Endothelial cell of umbilical vein (primary cell): ENCODE measurements at regions of chr2 and their contacts with region 1.

Region 1: GRCh38 chr2:212249451-212249850 is 289.2 kb downstream of the ERBB4 start:
- DNase-seq: peak; percentile 46
- H3K4me3 ChIP-seq: no peak overlapping the region
- H3K27ac ChIP-seq: no peak overlapping the region
- H3K4me1 ChIP-seq: no peaks in the 10 kb centered on the region
- H3K27me3 ChIP-seq: no peaks in the 10 kb centered on the region
- CTCF ChIP-seq: peak; percentile 23 to 41
- POLR2A ChIP-seq: no peak

Region 2: GRCh38 chr2:211455216-211455841 is 794.1 kb before region 1 on chr2:
- CTCF ChIA-PET with region 1: interaction called, 11 read pairs
- POLR2A ChIA-PET with region 1: no interaction called
- dilution Hi-C with region 1: no loop called
- intact Hi-C with region 1: no loop called
- DNase-seq: peak; percentile 63
- H3K4me3 ChIP-seq: no peak overlapping the region
- H3K27ac ChIP-seq: no peak overlapping the region
- H3K4me1 ChIP-seq: no peaks in the 10 kb centered on the region
- H3K27me3 ChIP-seq: no peaks in the 10 kb centered on the region
- CTCF ChIP-seq: peak; percentile 78 to 83
- POLR2A ChIP-seq: no peak

Region 3: GRCh38 chr2:211751848-211752247 is 497.6 kb before region 1 on chr2:
- CTCF ChIA-PET with region 1: interaction called, 84 read pairs
- POLR2A ChIA-PET with region 1: no interaction called
- dilution Hi-C with region 1: no loop called
- intact Hi-C with region 1: no loop called
- DNase-seq: peak; percentile 48
- H3K4me3 ChIP-seq: no peak overlapping the region
- H3K27ac ChIP-seq: no peak overlapping the region
- H3K4me1 ChIP-seq: peaks cover 7% of the 10 kb centered on the region
- H3K27me3 ChIP-seq: no peaks in the 10 kb centered on the region
- CTCF ChIP-seq: no peak
- POLR2A ChIP-seq: no peak

Region 4: DNA sequence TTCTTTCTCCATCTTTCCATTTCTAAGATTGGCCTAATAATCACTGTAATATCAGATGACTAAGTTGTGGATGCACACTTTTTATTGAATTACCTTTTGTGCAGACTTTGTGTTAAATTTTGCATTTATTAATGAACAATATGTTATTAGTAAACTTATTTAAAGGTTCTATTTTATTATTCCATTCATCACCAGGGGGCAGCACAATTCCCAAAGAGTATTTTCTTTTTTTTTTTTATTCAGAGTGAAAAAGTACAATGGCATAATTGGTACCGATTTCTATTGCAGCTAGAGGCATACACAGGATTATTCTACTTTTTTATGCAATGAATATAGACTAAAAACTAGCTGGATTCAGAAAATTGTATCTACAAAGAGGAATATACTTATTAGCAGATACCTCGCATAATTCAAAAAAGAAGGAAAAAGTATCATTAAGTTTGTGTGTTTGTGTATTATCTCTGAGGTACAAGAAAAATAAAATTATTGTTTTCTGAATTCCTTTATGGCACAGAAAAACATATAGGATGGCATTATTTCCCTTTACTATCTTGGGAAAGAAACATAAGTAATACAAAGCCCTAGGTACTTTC is 101.4 kb before region 1 on chr2:
- CTCF ChIA-PET with region 1: interaction called, 16 read pairs
- POLR2A ChIA-PET with region 1: no interaction called
- dilution Hi-C with region 1: no loop called
- intact Hi-C with region 1: loop called (anchors 2 kb)
- DNase-seq: peak; percentile 39
- H3K4me3 ChIP-seq: no peak overlapping the region
- H3K27ac ChIP-seq: no peak overlapping the region
- H3K4me1 ChIP-seq: no peaks in the 10 kb centered on the region
- H3K27me3 ChIP-seq: no peaks in the 10 kb centered on the region
- CTCF ChIP-seq: peak; percentile 19 to 21
- POLR2A ChIP-seq: no peak

Region 5: GRCh38 chr2:212237350-212238095 is 11.9 kb before region 1 on chr2:
- CTCF ChIA-PET with region 1: interaction called, 20 read pairs
- POLR2A ChIA-PET with region 1: no interaction called
- dilution Hi-C with region 1: no loop called
- intact Hi-C with region 1: no loop called
- DNase-seq: no peak
- H3K4me3 ChIP-seq: no peak overlapping the region
- H3K27ac ChIP-seq: no peak overlapping the region
- H3K4me1 ChIP-seq: no peaks in the 10 kb centered on the region
- H3K27me3 ChIP-seq: no peaks in the 10 kb centered on the region
- CTCF ChIP-seq: no peak
- POLR2A ChIP-seq: no peak